ENCODE measurements at regions of chr1 and their contacts with region 1.

Region 1: GRCh38 chr1:84133479-84133878 is 10.6 kb upstream of the PRKACB start:
- DNase-seq: peak in 1 of 5 donors; percentile 29
- H3K4me3 ChIP-seq: no peak overlapping the region
- H3K27ac ChIP-seq: no peak overlapping the region
- H3K4me1 ChIP-seq: no peaks in the 10 kb centered on the region
- H3K27me3 ChIP-seq: no peaks in the 10 kb centered on the region
- CTCF ChIP-seq: no peak

Region 2: DNA sequence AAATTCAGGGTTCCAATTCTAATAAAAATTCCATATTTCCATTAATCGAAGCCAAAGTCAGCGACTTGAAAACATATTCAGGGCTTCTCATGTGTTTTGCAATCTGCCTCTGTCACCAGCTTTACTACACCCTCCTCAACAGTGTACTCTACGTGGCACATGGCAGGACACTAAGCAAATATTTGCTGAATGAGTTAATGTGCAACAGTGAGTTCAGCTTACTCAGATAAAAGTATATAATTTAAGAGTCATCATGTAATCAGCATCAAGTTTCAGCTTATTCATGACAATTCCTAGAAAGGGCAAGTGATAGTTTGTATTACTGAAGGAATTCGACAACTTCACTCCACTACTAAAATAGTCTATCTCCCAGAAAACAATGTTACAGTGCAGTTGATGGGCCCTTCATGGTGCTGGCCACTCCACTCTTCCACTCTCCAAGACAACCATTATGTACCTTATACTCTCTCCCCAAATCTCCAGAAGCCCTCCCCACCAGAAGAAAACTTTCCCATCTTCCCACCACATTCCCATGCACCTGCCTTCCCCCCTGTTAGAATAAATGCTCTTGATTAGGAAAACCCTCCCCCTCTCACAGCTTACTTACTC is 231.8 kb before region 1 on chr1:
- intact Hi-C with region 1: no loop called
- DNase-seq: no peak
- H3K4me3 ChIP-seq: no peak overlapping the region
- H3K27ac ChIP-seq: no peak overlapping the region
- H3K4me1 ChIP-seq: no peaks in the 10 kb centered on the region
- H3K27me3 ChIP-seq: no peaks in the 10 kb centered on the region
- CTCF ChIP-seq: no peak

Region 3: GRCh38 chr1:84427520-84428188 is 294.2 kb after region 1 on chr1:
- intact Hi-C with region 1: loop called (anchors 10 kb)
- DNase-seq: no peak
- H3K4me3 ChIP-seq: no peak overlapping the region
- H3K27ac ChIP-seq: no peak overlapping the region
- H3K4me1 ChIP-seq: no peaks in the 10 kb centered on the region
- H3K27me3 ChIP-seq: no peaks in the 10 kb centered on the region
- CTCF ChIP-seq: no peak

Region 4: DNA sequence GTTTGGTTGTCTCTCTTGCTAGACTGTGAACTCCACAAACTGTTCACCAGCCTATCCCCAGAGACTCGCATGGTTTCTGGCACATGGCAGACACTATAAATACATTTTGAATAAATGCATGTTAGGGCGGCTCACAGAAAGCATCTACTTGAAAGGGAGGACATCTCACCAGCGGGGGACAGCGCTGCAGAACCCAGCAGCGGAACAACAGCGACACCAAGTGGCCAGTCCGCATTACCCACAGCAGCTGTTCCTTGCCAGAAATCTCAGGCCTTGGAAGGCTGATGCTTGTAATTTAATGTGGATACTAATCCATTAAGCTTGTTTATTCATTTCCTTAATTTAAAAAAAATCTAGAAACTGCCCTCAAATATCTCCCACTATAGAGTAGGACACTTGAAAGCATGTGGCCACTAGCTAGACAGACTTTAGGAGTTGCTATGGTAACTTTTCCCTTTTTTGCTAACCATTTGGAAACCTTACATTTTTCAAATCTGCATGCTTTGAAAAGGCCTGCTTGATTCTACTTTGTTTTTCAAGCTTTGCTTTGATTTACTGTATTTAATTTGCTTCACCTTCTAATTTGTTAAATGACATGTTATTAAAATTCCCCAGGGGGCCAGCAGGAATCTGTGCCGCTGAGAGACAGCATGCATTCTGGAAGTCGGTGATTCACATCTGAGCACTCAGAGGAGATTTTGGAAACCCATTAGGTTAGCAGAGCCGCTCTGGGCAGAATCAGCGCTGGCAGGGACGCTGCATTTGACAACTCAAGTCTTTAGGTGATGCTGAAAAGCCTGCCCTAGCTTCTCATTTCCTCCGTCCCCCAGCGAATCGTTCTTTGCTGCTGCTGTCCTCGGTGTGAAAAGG is 620.3 kb after region 1 on chr1:
- intact Hi-C with region 1: loop called (anchors 10 kb)
- DNase-seq: peak; percentile 81 to 89 (median 85)
- H3K4me3 ChIP-seq: no peak overlapping the region
- H3K27ac ChIP-seq: no peak overlapping the region
- H3K4me1 ChIP-seq: peaks cover 0 to 2% (median 0%) of the 10 kb centered on the region in 3 donors
- H3K27me3 ChIP-seq: no peaks in the 10 kb centered on the region
- CTCF ChIP-seq: peak; percentile 95

Measured in kidney (tissue), 22 donors.